Activated B cell treated with CpG ODN at 0.5 μM for 24 hours (primary cell): ENCODE measurements at regions of chrX and their contacts with region 1.

Region 1: DNA sequence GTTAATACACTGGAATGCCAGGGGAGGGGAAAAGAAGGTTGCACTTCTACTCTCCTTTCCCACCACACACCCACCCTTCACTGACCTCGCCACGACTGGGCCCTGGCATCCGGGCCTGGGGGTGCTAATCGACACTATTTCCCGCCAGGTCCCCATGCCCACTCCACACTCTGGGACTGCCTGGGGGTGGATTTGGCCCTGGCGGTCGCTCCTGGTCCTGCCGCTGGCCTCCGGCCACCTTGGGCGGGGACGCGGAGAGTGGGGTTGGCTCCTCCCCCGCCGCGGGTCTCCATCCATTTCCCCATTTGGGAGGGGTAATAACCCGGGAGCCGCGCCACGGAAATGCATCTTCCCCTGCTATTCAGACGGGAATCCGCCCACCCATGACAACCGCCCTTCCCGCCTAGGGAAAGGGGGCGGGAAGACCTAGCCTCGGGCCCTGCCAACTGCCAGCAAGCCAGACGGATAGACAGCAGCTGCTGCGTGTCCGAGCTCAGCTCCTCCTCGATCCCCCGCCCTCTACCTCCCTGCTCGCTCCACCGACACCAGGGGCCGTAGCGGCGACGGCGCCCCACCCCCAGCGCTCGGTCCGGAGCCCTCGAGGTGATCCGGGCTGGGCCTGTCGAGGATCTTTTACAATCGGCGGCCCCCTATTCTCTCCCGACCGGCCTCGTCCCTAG is 78.1 kb downstream of the RLIM start:
- DNase-seq: peak; percentile 36
- ATAC-seq: peak; percentile 66
- H3K4me3 Mint-ChIP-seq: peak overlapping the region; percentile 83
- H3K27ac Mint-ChIP-seq: peak overlapping the region; percentile 24
- H3K4me1 Mint-ChIP-seq: peaks cover 13% of the 10 kb centered on the region
- H3K27me3 Mint-ChIP-seq: no peaks in the 10 kb centered on the region
- CTCF ChIP-seq: no peak

Region 2: GRCh38 chrX:74343343-74344279 is 192.7 kb before region 1 on chrX:
- CTCF ChIA-PET with region 1: no interaction called
- POLR2A ChIA-PET with region 1: no interaction called
- intact Hi-C with region 1: no loop called
- DNase-seq: no peak
- ATAC-seq: peak; percentile 70
- H3K4me3 Mint-ChIP-seq: no peak overlapping the region
- H3K27ac Mint-ChIP-seq: no peak overlapping the region
- H3K4me1 Mint-ChIP-seq: peaks cover 12% of the 10 kb centered on the region
- H3K27me3 Mint-ChIP-seq: peaks cover 3% of the 10 kb centered on the region
- CTCF ChIP-seq: no peak

Region 3: DNA sequence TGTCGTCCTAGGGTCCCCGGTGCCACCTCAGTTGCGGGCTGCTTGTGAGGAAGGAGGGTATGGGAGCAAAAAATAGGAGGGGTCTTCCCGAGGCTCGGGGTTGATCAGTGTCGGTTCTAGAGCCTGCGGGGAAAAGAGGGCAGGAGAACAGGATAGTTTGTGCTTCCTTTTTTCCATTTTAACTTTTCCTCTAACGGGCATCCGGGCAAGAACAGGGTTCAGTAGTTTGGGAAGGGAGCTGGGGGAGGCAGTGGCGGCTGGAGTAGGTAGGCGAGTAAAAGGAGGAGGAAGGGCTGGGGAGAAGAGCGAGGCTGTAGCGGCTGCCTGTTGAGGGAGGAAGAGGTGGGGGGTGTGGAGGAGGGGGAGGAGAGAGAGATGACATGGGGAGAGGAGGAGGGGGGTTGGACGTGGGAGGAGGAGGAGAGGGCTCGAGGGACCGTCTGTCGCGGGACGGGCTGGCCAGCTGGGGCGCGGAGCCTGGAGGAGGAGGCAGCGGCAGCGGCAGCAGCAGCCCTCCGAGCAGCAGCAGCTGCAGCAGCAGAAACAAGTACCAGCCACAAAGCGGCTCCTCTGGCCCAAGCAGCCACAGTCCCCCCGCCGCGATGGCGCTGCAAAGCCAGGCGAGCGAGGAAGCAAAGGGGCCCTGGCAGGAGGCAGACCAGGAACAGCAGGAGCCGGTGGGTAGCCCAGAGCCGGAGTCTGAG is 115.1 kb before region 1 on chrX and contains the start of gene SLC16A2:
- CTCF ChIA-PET with region 1: no interaction called
- POLR2A ChIA-PET with region 1: no interaction called
- intact Hi-C with region 1: loop called (anchors 5 kb)
- DNase-seq: peak; percentile 22
- ATAC-seq: peak; percentile 62
- H3K4me3 Mint-ChIP-seq: peak within 1 kb of the TSS; percentile 80
- H3K27ac Mint-ChIP-seq: no peak within 1 kb of the TSS
- H3K4me1 Mint-ChIP-seq: peaks cover 15% of the 10 kb centered on the region
- H3K27me3 Mint-ChIP-seq: peaks cover 22% of the 10 kb centered on the region
- CTCF ChIP-seq: no peak
- total RNA-seq, gene SLC16A2: not detected in 2 replicates

Region 4: DNA sequence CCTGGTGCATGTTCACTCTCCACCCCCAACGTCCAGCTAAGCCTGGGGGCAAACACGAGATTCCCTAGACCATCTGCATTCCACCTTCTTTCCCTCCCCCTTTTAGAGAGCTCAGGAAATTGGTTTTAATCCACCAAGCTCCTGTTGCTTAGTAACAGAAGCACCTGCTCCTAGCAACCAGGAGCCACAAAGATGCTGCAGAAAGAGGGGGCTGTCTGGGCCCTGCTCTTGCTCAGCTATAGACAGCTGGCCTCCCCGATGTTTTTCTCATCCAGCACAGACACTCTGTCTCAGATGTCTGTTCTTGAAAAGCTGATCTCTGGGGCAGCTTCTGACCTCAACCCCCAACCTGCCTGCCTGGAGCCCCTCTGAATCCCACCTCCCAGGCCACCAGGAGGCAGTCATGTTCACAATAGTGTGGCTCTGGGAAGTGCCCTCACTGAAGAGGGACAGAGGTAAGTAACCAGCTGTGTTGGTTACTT is 43.5 kb before region 1 on chrX:
- CTCF ChIA-PET with region 1: interaction called, 31 read pairs
- POLR2A ChIA-PET with region 1: no interaction called
- intact Hi-C with region 1: loop called (anchors 1 kb)
- DNase-seq: no peak
- ATAC-seq: peak; percentile 74
- H3K4me3 Mint-ChIP-seq: no peak overlapping the region
- H3K27ac Mint-ChIP-seq: no peak overlapping the region
- H3K4me1 Mint-ChIP-seq: no peaks in the 10 kb centered on the region
- H3K27me3 Mint-ChIP-seq: no peaks in the 10 kb centered on the region
- CTCF ChIP-seq: no peak

Region 5: GRCh38 chrX:74506317-74507115 is 29.8 kb before region 1 on chrX:
- CTCF ChIA-PET with region 1: interaction called, 3 read pairs
- POLR2A ChIA-PET with region 1: interaction called, 3 read pairs
- intact Hi-C with region 1: loop called (anchors 1 kb)
- DNase-seq: peak; percentile 18
- ATAC-seq: peak; percentile 99
- H3K4me3 Mint-ChIP-seq: peak overlapping the region; percentile 17
- H3K27ac Mint-ChIP-seq: peak overlapping the region; percentile 69
- H3K4me1 Mint-ChIP-seq: peaks cover 24% of the 10 kb centered on the region
- H3K27me3 Mint-ChIP-seq: no peaks in the 10 kb centered on the region
- CTCF ChIP-seq: no peak

Region 6: GRCh38 chrX:74557378-74557777 is 21.1 kb after region 1 on chrX:
- CTCF ChIA-PET with region 1: no interaction called
- POLR2A ChIA-PET with region 1: no interaction called
- intact Hi-C with region 1: no loop called
- DNase-seq: no peak
- ATAC-seq: no peak
- H3K4me3 Mint-ChIP-seq: no peak overlapping the region
- H3K27ac Mint-ChIP-seq: no peak overlapping the region
- H3K4me1 Mint-ChIP-seq: no peaks in the 10 kb centered on the region
- H3K27me3 Mint-ChIP-seq: peaks cover 2% of the 10 kb centered on the region
- CTCF ChIP-seq: no peak